ENCODE measurements at regions of chr4 and their contacts with region 1.

Region 1: DNA sequence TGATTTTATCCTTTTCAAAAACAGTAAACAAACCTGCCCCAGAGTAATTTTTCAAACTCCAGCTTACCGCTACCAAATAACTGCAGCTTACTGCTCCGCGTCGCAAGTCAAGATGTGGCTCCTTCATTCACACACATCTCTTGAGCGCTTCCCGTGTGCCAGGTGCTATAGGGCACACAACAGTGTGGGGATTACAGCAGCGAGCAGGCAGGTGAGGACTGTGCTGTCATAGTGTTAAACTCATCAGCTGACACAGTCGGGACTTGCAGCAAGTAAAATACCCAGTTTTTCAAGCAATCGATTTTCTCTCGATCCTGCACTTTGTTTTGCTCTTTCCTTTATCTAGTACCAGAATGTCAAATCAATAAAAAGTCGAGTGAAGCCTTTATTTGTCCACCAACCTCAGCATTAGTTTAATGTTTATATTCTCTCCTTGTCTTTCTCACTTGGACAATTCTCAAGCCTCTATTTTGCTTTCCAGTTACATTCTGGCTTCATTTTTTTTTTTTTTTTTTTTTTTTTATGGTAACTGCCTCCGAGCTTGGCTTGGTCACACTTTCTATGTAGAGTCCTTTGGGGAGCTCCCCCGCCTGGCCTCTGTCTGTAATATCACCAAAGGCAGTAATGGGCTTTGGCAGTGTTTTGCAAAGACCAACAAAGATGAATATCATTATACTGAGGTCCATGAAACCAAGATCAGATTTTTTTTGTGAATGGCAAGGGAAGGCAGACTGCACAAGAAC is 8.3 kb upstream of the ASB5 start:
- DNase-seq: peak; percentile 37 to 75 (median 66)
- ATAC-seq: peak; percentile 76 to 79
- H3K4me3 ChIP-seq: no peak overlapping the region
- H3K27ac ChIP-seq: no peak overlapping the region
- H3K4me1 ChIP-seq: no peaks in the 10 kb centered on the region
- H3K27me3 ChIP-seq: no peaks in the 10 kb centered on the region

Region 2: DNA sequence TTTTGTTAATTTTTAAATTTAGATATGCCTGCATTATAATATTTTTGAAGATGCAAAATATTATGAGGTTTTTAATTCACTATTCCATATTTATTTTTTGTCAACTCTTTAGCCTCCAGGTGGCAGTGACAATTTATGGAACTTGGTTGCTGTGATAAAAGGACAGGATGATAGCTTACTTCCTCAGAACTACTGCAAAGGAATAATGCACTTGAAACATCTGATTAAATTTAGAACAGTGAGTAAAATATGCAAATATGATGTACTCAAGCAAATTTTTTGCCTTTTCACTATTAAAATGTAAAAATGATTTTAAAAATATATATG is 127.0 kb before region 1 on chr4:
- intact Hi-C with region 1: loop called in 1 of 4 experiments (anchors 10 kb)
- DNase-seq: no peak
- ATAC-seq: no peak
- H3K4me3 ChIP-seq: no peak overlapping the region
- H3K27ac ChIP-seq: no peak overlapping the region
- H3K4me1 ChIP-seq: no peaks in the 10 kb centered on the region
- H3K27me3 ChIP-seq: no peaks in the 10 kb centered on the region

Region 3: GRCh38 chr4:176357359-176358082 is 80.2 kb after region 1 on chr4:
- intact Hi-C with region 1: no loop called
- DNase-seq: no peak
- ATAC-seq: no peak
- H3K4me3 ChIP-seq: no peak overlapping the region
- H3K27ac ChIP-seq: no peak overlapping the region
- H3K4me1 ChIP-seq: no peaks in the 10 kb centered on the region
- H3K27me3 ChIP-seq: no peaks in the 10 kb centered on the region